Activated B cell treated with CpG ODN at 0.5 μM for 24 hours (primary cell): ENCODE measurements at regions of chr21 and their contacts with region 1.

Region 1: GRCh38 chr21:31731802-31732596 is at the start of gene SCAF4:
- DNase-seq: peak; percentile 82
- ATAC-seq: peak; percentile 84
- H3K4me3 Mint-ChIP-seq: no peak within 1 kb of the TSS
- H3K27ac Mint-ChIP-seq: peak within 1 kb of the TSS; percentile 84
- H3K4me1 Mint-ChIP-seq: peaks cover 21% of the 10 kb centered on the region
- H3K27me3 Mint-ChIP-seq: no peaks in the 10 kb centered on the region
- CTCF ChIP-seq: no peak
- total RNA-seq, gene SCAF4: 71.6 and 80.5 TPM in 2 replicates

Region 2: GRCh38 chr21:31558962-31559367 is 173.0 kb before region 1 on chr21:
- CTCF ChIA-PET with region 1: no interaction called
- POLR2A ChIA-PET with region 1: no interaction called
- intact Hi-C with region 1: loop called (anchors 2 kb)
- DNase-seq: peak; percentile 80
- ATAC-seq: peak; percentile 90
- H3K4me3 Mint-ChIP-seq: peak overlapping the region; percentile 93
- H3K27ac Mint-ChIP-seq: no peak overlapping the region
- H3K4me1 Mint-ChIP-seq: peaks cover 24% of the 10 kb centered on the region
- H3K27me3 Mint-ChIP-seq: peaks cover 30% of the 10 kb centered on the region
- CTCF ChIP-seq: no peak

Region 3: DNA sequence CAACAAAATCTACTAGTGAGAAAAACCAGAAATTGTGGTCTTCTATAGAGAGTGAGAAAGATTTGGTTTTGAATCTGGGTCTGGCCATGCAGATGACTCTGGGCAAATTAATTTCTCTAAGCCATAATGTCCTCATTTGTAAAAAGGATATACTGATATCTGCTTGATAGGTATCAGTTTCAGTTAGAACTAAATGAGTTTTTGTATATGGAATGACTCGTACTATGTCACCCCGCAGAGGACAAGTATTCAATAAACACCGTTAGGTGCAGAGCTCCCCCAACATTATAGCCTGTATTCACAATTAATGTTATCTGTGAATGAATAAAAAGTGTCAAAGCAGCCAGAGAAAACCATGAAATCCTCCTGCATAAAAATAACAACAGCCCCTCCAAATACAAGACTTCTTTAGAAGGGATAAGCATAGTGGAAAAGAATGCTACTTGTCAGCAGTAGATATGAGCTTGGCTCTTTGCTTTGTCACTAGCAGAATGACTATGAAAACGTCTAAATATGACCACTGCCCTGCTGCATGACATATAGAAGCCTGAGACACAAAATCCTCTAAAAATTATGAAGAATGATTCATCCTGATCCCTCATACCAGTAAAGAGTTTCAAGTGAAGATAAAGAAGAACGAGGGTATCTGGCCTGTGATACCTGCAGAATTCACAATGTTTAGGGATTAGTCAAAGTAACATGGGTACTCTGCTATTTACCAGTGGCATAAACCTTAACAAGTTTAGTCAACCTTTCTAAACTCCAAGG is 17.8 kb before region 1 on chr21:
- CTCF ChIA-PET with region 1: no interaction called
- POLR2A ChIA-PET with region 1: interaction called, 3 read pairs
- intact Hi-C with region 1: loop called (anchors 1 kb)
- DNase-seq: no peak
- ATAC-seq: no peak
- H3K4me3 Mint-ChIP-seq: no peak overlapping the region
- H3K27ac Mint-ChIP-seq: no peak overlapping the region
- H3K4me1 Mint-ChIP-seq: peaks cover 93% of the 10 kb centered on the region
- H3K27me3 Mint-ChIP-seq: no peaks in the 10 kb centered on the region
- CTCF ChIP-seq: no peak

Region 4: GRCh38 chr21:31781737-31782136 is 49.7 kb after region 1 on chr21:
- CTCF ChIA-PET with region 1: interaction called, 3 read pairs
- POLR2A ChIA-PET with region 1: interaction called, 9 read pairs
- intact Hi-C with region 1: loop called (anchors 1 kb)
- DNase-seq: no peak
- ATAC-seq: no peak
- H3K4me3 Mint-ChIP-seq: no peak overlapping the region
- H3K27ac Mint-ChIP-seq: no peak overlapping the region
- H3K4me1 Mint-ChIP-seq: peaks cover 29% of the 10 kb centered on the region
- H3K27me3 Mint-ChIP-seq: no peaks in the 10 kb centered on the region
- CTCF ChIP-seq: no peak

Region 5: DNA sequence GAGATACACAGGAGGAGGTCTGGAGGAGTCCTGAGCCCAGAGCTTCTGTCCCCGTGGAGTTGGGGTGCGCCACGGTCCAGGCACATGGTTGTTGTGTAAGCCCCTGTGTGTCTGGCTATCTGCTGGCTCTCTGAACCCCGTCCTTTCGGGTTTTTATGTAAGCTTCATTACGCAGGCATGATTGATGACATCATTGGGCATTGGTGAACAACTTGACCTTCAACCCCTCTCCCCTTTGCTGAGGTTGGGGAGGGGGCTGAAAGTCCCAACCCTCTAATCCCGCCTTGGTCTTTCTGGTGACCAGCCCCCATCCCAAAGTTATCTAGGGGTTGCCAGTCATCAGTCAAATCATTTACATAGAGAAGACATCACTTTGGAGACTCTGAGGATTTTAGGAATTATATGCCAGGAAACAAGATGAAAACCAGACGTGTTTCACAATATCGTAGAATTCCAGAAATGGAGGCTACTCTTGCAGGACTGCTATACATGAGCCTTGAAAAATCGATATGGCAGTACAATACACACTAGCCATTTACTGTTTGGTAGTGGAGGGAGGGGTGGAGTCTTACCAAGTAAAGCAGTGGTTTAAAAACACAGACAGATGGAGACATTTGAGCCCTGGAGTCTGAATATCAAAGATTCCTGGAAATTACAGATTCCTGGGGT is 69.7 kb after region 1 on chr21:
- CTCF ChIA-PET with region 1: no interaction called
- POLR2A ChIA-PET with region 1: no interaction called
- intact Hi-C with region 1: no loop called
- DNase-seq: no peak
- ATAC-seq: no peak
- H3K4me3 Mint-ChIP-seq: no peak overlapping the region
- H3K27ac Mint-ChIP-seq: no peak overlapping the region
- H3K4me1 Mint-ChIP-seq: peaks cover 6% of the 10 kb centered on the region
- H3K27me3 Mint-ChIP-seq: peaks cover 23% of the 10 kb centered on the region
- CTCF ChIP-seq: no peak

Region 6: GRCh38 chr21:32392880-32393676 is 661.1 kb after region 1 on chr21 and contains the start of gene URB1:
- CTCF ChIA-PET with region 1: no interaction called
- POLR2A ChIA-PET with region 1: no interaction called
- intact Hi-C with region 1: loop called (anchors 1 kb)
- DNase-seq: peak; percentile 97
- ATAC-seq: peak; percentile 97
- H3K4me3 Mint-ChIP-seq: peak within 1 kb of the TSS; percentile 87
- H3K27ac Mint-ChIP-seq: peak within 1 kb of the TSS; percentile 83
- H3K4me1 Mint-ChIP-seq: peaks cover 41% of the 10 kb centered on the region
- H3K27me3 Mint-ChIP-seq: peaks cover 6% of the 10 kb centered on the region
- CTCF ChIP-seq: no peak
- total RNA-seq, gene URB1: 18.1 and 22.2 TPM in 2 replicates